ENCODE measurements at regions of chr16 and their contacts with region 1.

Region 1: DNA sequence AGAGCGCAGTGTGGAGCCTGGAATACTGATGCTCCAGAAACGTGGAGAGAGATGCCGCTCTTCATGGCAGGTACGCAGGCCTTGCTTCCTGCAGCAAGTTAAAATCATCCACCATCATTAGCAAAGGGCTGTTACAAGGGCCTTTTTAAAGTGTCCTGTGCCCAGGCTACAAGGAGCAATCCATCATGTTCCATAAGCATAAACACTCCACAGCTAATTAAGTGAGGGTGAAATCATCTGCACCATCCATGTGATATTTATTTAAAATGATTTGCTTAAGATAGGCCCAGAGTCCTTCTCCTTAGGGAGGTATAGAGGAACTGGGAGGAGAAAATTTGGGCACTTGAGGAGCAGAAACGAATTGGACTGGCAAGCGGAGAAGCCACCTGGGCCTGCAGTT is 372.1 kb downstream of the XYLT1 start:
- DNase-seq: no peak
- H3K4me3 ChIP-seq: no peak overlapping the region
- H3K27ac ChIP-seq: no peak overlapping the region
- H3K4me1 ChIP-seq: no peaks in the 10 kb centered on the region
- H3K27me3 ChIP-seq: no peaks in the 10 kb centered on the region
- CTCF ChIP-seq: no peak
- EP300 ChIP-seq: no peak
- POLR2A ChIP-seq: no peak

Region 2: GRCh38 chr16:15714393-15715172 is 1384.1 kb before region 1 on chr16:
- intact Hi-C with region 1: no loop called
- DNase-seq: no peak
- H3K4me3 ChIP-seq: no peak overlapping the region
- H3K27ac ChIP-seq: peak overlapping the region; percentile 25 to 68 (median 38)
- H3K4me1 ChIP-seq: peaks cover 0 to 54% (median 37%) of the 10 kb centered on the region in 4 donors
- H3K27me3 ChIP-seq: no peaks in the 10 kb centered on the region
- CTCF ChIP-seq: no peak
- EP300 ChIP-seq: no peak
- POLR2A ChIP-seq: no peak

Region 3: GRCh38 chr16:17149904-17150483 is 51.3 kb after region 1 on chr16:
- intact Hi-C with region 1: loop called (anchors 10 kb)
- DNase-seq: no peak
- H3K4me3 ChIP-seq: no peak overlapping the region
- H3K27ac ChIP-seq: no peak overlapping the region
- H3K4me1 ChIP-seq: no peaks in the 10 kb centered on the region
- H3K27me3 ChIP-seq: no peaks in the 10 kb centered on the region
- CTCF ChIP-seq: no peak
- EP300 ChIP-seq: no peak
- POLR2A ChIP-seq: no peak